ENCODE measurements at regions of chr10 and their contacts with region 1.

Region 1: GRCh38 chr10:17001961-17002749 is 127.5 kb downstream of the CUBN start:
- DNase-seq: peak; percentile 44
- H3K4me3 Mint-ChIP-seq: no peak overlapping the region
- H3K27ac Mint-ChIP-seq: peak overlapping the region; percentile 5
- H3K4me1 Mint-ChIP-seq: peaks cover 57% of the 10 kb centered on the region
- H3K27me3 Mint-ChIP-seq: peaks cover 5% of the 10 kb centered on the region

Region 2: DNA sequence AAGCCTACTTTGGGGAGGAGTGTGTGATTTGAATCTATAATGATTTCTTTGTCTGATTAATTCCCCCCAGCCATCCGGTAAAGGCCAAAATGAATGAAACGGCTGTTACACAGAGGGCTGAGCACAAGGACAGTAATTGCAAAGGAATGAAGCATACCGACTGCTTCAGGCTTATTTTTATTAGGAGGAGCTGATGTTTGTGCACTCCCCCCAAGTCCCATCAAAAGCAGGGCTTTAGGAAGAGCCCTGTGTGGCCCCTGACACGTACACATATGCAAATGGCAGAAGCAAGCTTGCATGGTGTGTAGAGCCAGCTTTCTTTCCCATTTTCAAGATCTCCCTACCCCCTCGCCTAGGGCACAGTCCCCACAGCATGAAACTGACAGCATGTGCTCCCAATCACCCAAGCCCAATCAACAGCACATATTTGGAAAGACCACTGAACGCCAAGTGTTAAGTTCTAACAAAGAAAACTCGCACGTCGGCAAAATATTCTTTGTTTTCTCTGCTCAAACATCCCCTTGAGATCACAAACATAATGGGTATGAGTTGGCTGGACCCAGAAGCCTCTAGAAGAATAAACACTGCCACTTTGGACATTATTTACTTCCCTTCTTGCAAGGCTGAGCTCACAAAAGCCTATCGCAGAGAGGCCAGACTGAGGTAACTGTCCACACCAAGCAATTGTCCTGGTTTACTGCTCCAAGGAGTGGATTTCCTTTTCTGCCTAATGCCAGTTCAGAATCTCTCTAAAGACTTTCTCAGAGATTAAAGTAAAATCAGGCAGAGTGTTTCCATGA is 15.5 kb before region 1 on chr10:
- CTCF ChIA-PET with region 1: no interaction called
- intact Hi-C with region 1: no loop called
- DNase-seq: no peak
- H3K4me3 Mint-ChIP-seq: no peak overlapping the region
- H3K27ac Mint-ChIP-seq: no peak overlapping the region
- H3K4me1 Mint-ChIP-seq: no peaks in the 10 kb centered on the region
- H3K27me3 Mint-ChIP-seq: no peaks in the 10 kb centered on the region

Region 3: DNA sequence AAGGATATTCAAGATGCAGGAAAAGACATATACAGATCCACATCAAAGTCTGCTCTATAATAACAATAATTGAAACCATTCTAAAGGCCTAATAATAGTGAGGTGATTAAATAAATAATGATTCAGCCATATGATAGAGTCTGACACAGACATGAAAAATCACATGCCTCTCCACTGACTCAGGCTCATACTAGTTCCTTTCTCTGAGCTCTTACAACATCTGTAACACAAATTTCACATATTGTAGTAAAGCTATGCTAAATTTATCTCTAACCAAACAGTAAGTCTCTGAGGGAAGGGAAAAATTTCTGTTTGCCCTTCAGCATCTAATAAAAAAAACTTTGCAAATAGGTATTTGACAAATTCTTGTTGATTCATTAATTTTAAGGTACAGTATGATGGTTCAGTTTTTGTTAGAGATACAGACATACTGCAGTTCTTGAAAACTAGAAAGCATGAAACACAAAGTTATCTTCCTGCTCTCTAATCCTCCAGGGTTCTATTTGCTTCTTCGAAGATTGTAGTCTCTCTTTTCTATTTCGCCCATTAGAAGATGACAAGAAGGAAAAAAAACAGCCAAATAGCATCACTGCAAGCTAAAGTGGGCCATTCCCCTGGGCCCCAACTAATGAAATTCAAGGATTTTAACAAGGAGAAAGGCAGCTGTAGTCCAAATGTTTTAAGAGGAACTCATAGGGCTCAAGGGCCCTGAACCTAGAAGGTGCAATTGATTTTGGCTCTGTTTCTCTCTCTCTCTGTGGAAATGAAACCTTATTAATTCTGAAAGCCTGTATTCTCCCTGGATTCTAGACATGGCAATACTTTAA is 73.6 kb after region 1 on chr10:
- CTCF ChIA-PET with region 1: no interaction called
- intact Hi-C with region 1: loop called (anchors 2 kb)
- DNase-seq: no peak
- H3K4me3 Mint-ChIP-seq: no peak overlapping the region
- H3K27ac Mint-ChIP-seq: no peak overlapping the region
- H3K4me1 Mint-ChIP-seq: peaks cover 28% of the 10 kb centered on the region
- H3K27me3 Mint-ChIP-seq: no peaks in the 10 kb centered on the region

Region 4: GRCh38 chr10:18456984-18457383 is 1454.8 kb after region 1 on chr10:
- CTCF ChIA-PET with region 1: no interaction called
- intact Hi-C with region 1: no loop called
- DNase-seq: no peak
- H3K4me3 Mint-ChIP-seq: no peak overlapping the region
- H3K27ac Mint-ChIP-seq: no peak overlapping the region
- H3K4me1 Mint-ChIP-seq: no peaks in the 10 kb centered on the region
- H3K27me3 Mint-ChIP-seq: no peaks in the 10 kb centered on the region